PC-3 (cell line): ENCODE measurements at regions of chr5 and their contacts with region 1.

Region 1: GRCh38 chr5:82364497-82364896 is 86.3 kb upstream of the RPS23 start:
- DNase-seq: peak; percentile 66
- ATAC-seq: peak; percentile 70
- H3K4me3 ChIP-seq: no peak overlapping the region
- H3K27ac ChIP-seq: peak overlapping the region; percentile 97
- H3K4me1 ChIP-seq: peaks cover 22% of the 10 kb centered on the region
- H3K27me3 ChIP-seq: no peaks in the 10 kb centered on the region
- CTCF ChIP-seq: peak; percentile 61

Region 2: DNA sequence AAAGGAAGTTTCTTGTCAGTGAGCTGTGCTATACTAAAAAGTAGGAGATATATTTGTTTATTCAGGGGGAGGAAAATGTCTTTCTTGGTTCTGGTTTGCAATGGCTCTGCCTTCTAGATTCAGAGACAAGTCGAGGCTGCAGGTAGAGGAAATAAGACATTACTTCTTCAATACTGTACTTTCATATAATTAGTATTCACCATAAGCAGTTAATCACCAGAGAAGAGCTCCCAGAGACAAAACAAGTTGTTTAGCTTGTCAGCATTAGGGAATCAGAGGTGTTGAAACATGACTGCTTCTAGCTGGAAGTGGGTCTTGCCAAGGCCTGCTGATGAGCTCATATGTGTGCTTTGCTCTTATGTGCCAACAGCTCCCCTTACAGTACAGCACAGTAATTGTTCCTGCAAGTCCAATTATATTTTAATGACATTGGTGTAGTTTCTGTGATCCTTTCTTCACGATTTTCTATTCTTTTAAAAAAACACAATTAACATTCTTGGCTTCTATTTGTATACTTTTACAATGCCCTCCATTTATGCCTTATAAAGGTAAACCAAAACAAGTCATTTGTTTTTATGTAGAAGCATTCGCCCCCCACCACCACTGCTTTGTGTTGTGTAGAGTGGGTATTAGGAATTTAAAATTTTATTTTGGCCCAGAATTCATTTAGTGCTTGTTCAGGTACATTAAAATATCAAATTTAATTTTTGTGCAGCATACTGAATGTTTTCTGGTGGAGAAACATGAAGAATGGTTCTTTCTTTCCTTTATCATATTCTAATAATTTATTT is 198.6 kb before region 1 on chr5:
- CTCF ChIA-PET with region 1: no interaction called
- POLR2A ChIA-PET with region 1: no interaction called
- intact Hi-C with region 1: no loop called
- DNase-seq: peak; percentile 73
- ATAC-seq: peak; percentile 78
- H3K4me3 ChIP-seq: no peak overlapping the region
- H3K27ac ChIP-seq: peak overlapping the region; percentile 68; the same call in 1 of the 2 replicates
- H3K4me1 ChIP-seq: peaks cover 28% of the 10 kb centered on the region
- H3K27me3 ChIP-seq: no peaks in the 10 kb centered on the region
- CTCF ChIP-seq: peak; percentile 88

Region 3: DNA sequence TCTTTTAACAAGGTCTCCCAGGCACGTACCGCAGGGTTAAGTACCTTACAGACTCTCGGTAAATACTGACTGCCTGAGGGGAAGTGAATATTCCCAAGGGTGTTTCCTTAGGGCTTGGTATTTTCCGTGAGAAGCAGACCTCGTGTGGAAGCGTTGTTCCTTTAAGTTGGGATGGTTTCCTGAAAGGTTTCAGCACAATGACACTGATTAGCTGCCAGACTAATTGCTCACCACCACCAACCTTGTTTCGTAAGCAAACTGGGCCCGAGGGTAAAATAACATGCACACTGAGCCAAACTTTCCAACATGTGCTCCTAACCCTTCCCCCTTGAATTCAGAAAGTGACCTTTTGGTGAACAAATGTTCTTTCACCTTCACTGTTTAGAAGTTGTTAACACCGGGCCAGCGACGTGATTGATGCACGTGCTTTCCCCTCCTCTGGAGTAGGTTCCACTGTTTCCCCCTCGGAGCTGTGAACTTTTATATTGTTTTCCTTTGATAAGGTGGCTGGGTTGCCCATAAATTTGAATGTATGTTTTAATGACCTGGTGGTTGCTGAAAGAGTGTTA is 41.8 kb after region 1 on chr5:
- CTCF ChIA-PET with region 1: interaction called, 3 read pairs
- POLR2A ChIA-PET with region 1: no interaction called
- intact Hi-C with region 1: loop called (anchors 1 kb)
- DNase-seq: peak; percentile 93
- ATAC-seq: peak; percentile 79
- H3K4me3 ChIP-seq: peak overlapping the region; percentile 19; the same call in 1 of the 2 replicates
- H3K27ac ChIP-seq: peak overlapping the region; percentile 98
- H3K4me1 ChIP-seq: peaks cover 28% of the 10 kb centered on the region
- H3K27me3 ChIP-seq: no peaks in the 10 kb centered on the region
- CTCF ChIP-seq: no peak

Region 4: GRCh38 chr5:82421119-82421518 is 56.6 kb after region 1 on chr5:
- CTCF ChIA-PET with region 1: interaction called, 6 read pairs
- POLR2A ChIA-PET with region 1: no interaction called
- intact Hi-C with region 1: loop called (anchors 1 kb)
- DNase-seq: peak; percentile 98
- ATAC-seq: peak; percentile 98
- H3K4me3 ChIP-seq: no peak overlapping the region
- H3K27ac ChIP-seq: peak overlapping the region; percentile 70
- H3K4me1 ChIP-seq: peaks cover 26% of the 10 kb centered on the region
- H3K27me3 ChIP-seq: no peaks in the 10 kb centered on the region
- CTCF ChIP-seq: peak; percentile 58